ENCODE measurements at regions of chr7 and their contacts with region 1.

Region 1: DNA sequence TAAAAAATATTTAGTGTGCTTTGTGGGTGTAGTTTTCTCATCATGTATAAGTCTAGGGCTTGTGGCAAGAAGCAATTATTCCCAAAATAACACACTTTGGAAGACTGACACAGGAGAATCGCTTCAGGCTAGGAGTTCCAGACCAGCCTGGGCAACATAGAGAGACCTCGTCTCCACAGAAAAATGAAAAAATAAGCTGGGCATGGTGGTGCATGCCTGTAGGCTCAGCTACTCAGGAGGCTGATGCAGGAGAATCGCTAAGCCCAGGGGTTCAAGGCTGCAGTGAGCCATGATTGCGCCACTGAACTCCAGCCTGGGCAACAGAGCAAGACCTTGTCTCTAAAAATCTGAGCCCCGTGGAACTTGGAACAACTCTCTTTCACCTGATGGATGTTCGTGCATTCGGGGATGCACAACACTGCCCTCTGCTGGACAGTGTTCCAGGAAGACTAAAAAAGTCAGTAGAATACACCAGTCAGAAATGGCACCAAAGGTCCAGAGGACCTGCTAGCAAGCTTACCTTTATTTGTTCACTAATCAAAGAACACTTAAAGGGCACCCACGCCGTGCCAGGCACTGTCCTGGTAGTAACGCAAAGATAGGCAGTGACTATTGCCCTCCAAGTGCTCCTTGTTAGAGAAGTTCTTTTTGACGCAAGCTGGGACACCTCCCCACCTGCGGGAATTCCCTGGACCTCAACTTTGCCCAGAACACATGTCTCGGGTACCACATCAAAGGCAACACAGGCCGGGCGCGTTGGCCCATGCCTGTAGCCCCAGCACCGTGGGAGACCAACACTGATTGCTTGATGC is 81.9 kb upstream of the CALN1 start:
- DNase-seq: peak; percentile 46 to 90
- H3K4me3 ChIP-seq: no peak overlapping the region
- H3K27ac ChIP-seq: no peak overlapping the region
- H3K4me1 ChIP-seq: no peaks in the 10 kb centered on the region
- H3K27me3 ChIP-seq: no peaks in the 10 kb centered on the region
- CTCF ChIP-seq: peak; percentile 47 to 77 (median 72)
- EP300 ChIP-seq: no peak
- POLR2A ChIP-seq: no peak
- RAD21 ChIP-seq: peak; percentile 72 to 83

Region 2: DNA sequence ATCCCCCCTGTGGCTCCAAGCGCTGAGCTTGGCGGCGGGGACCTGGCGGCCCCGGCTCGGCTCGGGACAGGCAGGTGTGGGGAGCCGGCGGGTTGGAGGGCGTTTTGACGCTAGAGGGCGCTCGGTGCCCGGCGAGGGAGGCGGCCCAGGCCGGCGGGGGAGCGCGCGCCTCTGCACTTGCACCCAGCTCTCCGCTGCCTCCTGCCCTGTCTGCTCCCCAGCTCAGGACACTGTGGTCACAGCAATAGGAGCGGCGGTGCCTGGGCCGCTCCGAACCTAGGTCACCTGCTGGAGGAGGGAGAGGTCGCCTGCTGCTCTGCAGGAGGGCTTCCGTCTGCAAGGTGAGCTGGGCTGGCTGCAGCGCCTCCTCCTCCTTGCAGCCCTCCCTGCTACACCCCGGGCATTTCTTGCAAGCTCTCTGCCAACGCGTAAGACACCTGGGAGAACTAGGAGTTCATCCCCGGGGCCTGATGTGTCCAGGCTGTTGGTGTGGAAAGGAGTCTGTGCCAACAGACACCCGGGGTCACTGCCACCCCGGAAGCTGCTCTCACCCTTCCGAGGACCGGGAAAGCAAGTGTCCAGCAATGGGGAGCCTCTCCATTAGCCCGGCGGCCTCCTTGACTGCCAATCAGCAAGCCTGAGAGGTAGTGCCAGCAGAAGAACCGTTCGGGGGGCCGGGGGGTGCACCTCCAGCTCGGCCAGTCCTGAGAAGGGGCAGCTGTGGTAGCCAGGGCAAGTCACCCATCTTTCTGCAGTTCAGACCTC is 741.7 kb before region 1 on chr7:
- CTCF ChIA-PET with region 1: interaction called, 11 read pairs
- POLR2A ChIA-PET with region 1: no interaction called
- DNase-seq: peak; percentile 53 to 98
- H3K4me3 ChIP-seq: peak overlapping the region; percentile 30 to 56 (median 50); a peak in 7 of 8 replicates
- H3K27ac ChIP-seq: no peak overlapping the region
- H3K4me1 ChIP-seq: no peaks in the 10 kb centered on the region; a peak in 1 of 7 replicates
- H3K27me3 ChIP-seq: no peaks in the 10 kb centered on the region
- CTCF ChIP-seq: peak; percentile 75 to 84 (median 83)
- EP300 ChIP-seq: no peak
- POLR2A ChIP-seq: no peak
- RAD21 ChIP-seq: peak; percentile 91

Region 3: GRCh38 chr7:71925663-71926062 is 568.4 kb before region 1 on chr7:
- CTCF ChIA-PET with region 1: interaction called, 10 read pairs
- POLR2A ChIA-PET with region 1: no interaction called
- DNase-seq: peak; percentile 50 to 59
- H3K4me3 ChIP-seq: no peak overlapping the region
- H3K27ac ChIP-seq: no peak overlapping the region
- H3K4me1 ChIP-seq: no peaks in the 10 kb centered on the region
- H3K27me3 ChIP-seq: no peaks in the 10 kb centered on the region
- CTCF ChIP-seq: peak; percentile 66 to 99 (median 96)
- EP300 ChIP-seq: no peak
- POLR2A ChIP-seq: no peak
- RAD21 ChIP-seq: peak; percentile 93

Region 4: GRCh38 chr7:72334066-72334465 is 160.0 kb before region 1 on chr7:
- CTCF ChIA-PET with region 1: interaction called, 18 read pairs
- POLR2A ChIA-PET with region 1: interaction called, 5 read pairs
- DNase-seq: peak in 1 of 2 experiments; percentile 48
- H3K4me3 ChIP-seq: no peak overlapping the region
- H3K27ac ChIP-seq: no peak overlapping the region
- H3K4me1 ChIP-seq: peaks cover 4 to 17% (median 13%) of the 10 kb centered on the region in 4 experiments
- H3K27me3 ChIP-seq: peaks cover 0 to 19% (median 9%) of the 10 kb centered on the region in 4 experiments; a peak in 6 of 7 replicates
- CTCF ChIP-seq: peak in 2 of 3 experiments; percentile 57 to 77; a peak in 2 of 4 replicates
- EP300 ChIP-seq: no peak
- POLR2A ChIP-seq: no peak
- RAD21 ChIP-seq: peak; percentile 66 to 72

Region 5: DNA sequence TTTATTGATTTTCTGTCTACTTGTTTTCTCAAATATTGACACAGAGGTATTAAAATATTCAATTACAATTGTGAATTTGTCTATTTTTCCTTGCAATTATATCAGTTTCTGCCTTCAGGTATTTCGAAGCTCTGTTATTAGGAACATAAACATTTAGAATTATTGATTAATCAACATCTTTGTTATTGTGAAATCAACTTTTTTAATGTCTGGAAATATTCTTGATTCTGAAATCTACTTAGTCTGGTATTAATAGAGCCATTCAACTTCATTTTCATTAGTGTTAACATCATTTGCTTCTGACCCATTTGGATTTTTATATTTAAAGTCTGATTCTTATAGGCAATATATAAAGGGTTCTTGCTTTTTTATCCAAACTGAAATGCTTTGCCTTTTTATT is 12.1 kb before region 1 on chr7:
- CTCF ChIA-PET with region 1: interaction called, 15 read pairs
- POLR2A ChIA-PET with region 1: no interaction called
- DNase-seq: no peak
- H3K4me3 ChIP-seq: no peak overlapping the region
- H3K27ac ChIP-seq: no peak overlapping the region
- H3K4me1 ChIP-seq: no peaks in the 10 kb centered on the region
- H3K27me3 ChIP-seq: no peaks in the 10 kb centered on the region
- CTCF ChIP-seq: no peak
- EP300 ChIP-seq: no peak
- POLR2A ChIP-seq: no peak
- RAD21 ChIP-seq: no peak

Region 6: DNA sequence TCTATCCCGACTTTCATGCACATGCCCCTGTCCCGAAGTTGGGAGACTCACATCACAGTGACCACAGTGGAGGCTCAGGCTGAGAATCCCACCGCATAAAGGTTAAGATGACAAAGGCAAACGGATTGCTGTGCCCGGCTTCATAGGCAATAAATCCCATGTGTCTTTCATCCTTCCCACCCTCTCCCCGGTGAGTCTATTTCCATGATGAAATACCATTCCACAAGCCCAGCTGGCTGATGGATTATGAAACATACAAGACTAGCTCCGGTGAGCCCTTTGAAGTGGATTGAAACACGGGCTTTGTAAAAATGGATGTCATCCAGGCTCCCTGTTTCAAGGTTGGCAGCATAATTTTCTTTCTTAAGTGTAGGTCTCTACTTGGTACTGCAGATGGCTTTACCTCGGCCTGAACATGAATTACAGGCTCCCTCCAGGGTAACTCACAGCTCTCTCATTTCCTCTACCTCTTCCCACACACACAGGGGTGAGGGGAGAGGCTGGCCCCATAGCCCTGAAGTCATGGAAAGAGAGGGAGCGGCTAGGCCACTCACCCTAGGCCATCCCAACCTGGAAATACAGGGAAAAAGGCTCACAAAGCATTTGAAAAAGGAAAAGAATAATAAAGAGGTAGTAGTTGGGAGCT is 10.1 kb after region 1 on chr7:
- CTCF ChIA-PET with region 1: interaction called, 30 read pairs
- POLR2A ChIA-PET with region 1: no interaction called
- DNase-seq: no peak
- H3K4me3 ChIP-seq: no peak overlapping the region
- H3K27ac ChIP-seq: no peak overlapping the region
- H3K4me1 ChIP-seq: no peaks in the 10 kb centered on the region
- H3K27me3 ChIP-seq: no peaks in the 10 kb centered on the region
- CTCF ChIP-seq: no peak
- EP300 ChIP-seq: no peak
- POLR2A ChIP-seq: no peak
- RAD21 ChIP-seq: no peak

Region 7: GRCh38 chr7:72538856-72539255 is 44.8 kb after region 1 on chr7:
- CTCF ChIA-PET with region 1: interaction called, 11 read pairs
- POLR2A ChIA-PET with region 1: no interaction called
- DNase-seq: no peak
- H3K4me3 ChIP-seq: no peak overlapping the region
- H3K27ac ChIP-seq: no peak overlapping the region
- H3K4me1 ChIP-seq: peaks cover 0 to 2% (median 0%) of the 10 kb centered on the region in 4 experiments; a peak in 1 of 7 replicates
- H3K27me3 ChIP-seq: no peaks in the 10 kb centered on the region
- CTCF ChIP-seq: no peak
- EP300 ChIP-seq: no peak
- POLR2A ChIP-seq: no peak
- RAD21 ChIP-seq: no peak

Measured in H1 (cell line).